A673 (cell line): ENCODE measurements at regions of chr12 and their contacts with region 1.

Region 1: DNA sequence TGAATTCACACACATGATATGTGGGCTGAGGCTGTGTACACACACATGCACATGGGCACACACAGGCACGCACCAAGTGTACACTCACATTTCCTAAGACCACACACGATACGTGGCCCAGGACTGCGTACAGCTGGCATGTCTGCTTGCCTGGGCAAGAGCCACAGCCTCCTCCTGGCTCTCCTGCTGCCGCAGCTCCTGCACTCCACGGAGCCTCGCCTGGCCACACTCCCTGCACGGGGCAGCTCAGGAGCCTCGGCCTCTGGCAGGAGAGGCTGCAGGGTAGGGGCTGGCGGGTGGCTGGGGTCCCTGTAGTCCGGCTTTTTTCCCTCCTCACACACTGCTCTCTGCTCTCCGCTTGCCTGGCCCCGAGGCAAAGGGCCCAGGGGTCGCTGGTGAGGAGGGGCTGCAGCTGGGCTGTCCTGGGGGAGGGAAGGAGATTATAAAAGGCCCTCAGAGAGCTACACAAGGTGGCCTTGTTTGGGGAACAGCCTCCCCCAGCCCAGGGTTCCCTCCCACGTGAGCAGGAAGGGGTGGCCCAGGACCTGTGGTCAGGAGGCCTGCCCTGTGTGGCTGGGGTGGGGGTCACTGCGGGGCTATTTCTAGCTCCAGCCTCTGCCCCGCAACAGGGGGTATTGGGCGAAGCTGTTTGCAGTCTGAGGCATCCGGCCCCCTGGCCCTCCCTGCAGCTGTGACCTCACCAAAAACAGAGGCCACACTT is 89.0 kb upstream of the SFSWAP start:
- DNase-seq: no peak
- H3K4me3 ChIP-seq: no peak overlapping the region
- H3K27ac ChIP-seq: no peak overlapping the region
- H3K4me1 ChIP-seq: peaks cover 15% of the 10 kb centered on the region
- H3K27me3 ChIP-seq: peaks cover 32% of the 10 kb centered on the region
- CTCF ChIP-seq: no peak

Region 2: GRCh38 chr12:130970165-130970907 is 651.5 kb before region 1 on chr12:
- CTCF ChIA-PET with region 1: no interaction called
- POLR2A ChIA-PET with region 1: no interaction called
- intact Hi-C with region 1: no loop called
- DNase-seq: no peak
- H3K4me3 ChIP-seq: no peak overlapping the region
- H3K27ac ChIP-seq: no peak overlapping the region
- H3K4me1 ChIP-seq: peaks cover 9% of the 10 kb centered on the region
- H3K27me3 ChIP-seq: no peaks in the 10 kb centered on the region
- CTCF ChIP-seq: no peak

Region 3: DNA sequence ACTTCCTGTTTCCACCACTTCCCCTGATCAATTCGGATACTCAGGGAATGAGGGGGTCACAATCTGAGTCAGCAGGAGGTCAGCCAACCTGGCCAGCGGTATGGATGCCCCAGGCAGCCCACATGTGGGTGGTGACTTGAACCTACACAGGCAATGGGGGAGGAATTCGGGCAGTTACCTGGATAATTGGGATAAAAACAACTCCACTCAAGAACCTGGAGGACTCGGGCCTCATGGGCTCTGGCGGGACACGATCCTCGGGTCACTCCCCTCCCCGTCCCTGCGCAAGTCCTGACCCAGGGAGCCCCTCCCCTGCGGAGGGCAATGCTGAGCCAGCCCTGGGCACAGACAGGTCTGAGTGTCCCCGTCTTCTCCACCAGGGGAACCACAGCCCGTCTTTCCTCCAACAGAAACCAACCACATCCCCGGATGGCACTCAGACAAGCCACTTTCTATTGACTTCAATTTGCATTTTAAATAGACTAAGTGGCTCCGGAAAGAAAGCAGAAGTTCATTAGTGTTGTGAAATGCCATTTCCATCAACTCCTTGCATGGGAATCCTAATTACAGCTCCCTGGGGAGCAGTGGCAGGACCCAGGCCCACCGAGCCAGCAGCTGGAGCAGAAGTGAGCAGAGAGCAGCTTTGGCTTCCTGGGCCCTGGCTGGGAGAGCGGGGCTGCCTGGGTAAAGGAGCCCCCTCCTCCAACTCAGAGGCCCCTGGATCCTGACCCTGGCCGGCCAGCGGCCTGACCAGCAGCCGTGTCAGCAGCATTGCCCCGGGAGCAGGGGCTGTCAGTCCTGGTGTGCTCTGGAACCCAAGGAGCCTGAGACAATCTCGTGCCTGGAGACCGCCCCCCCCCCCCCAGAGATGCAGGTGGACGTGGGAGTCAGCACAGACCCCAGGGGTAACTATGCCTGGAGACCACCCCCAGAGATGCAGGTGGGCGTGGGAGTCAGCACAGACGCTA is 294.1 kb before region 1 on chr12:
- CTCF ChIA-PET with region 1: no interaction called
- POLR2A ChIA-PET with region 1: no interaction called
- intact Hi-C with region 1: no loop called
- DNase-seq: peak; percentile 44
- H3K4me3 ChIP-seq: no peak overlapping the region
- H3K27ac ChIP-seq: no peak overlapping the region
- H3K4me1 ChIP-seq: no peaks in the 10 kb centered on the region
- H3K27me3 ChIP-seq: no peaks in the 10 kb centered on the region
- CTCF ChIP-seq: 0 out of 2 replicates have a peak, but pooled peaks have one; percentile 29

Region 4: DNA sequence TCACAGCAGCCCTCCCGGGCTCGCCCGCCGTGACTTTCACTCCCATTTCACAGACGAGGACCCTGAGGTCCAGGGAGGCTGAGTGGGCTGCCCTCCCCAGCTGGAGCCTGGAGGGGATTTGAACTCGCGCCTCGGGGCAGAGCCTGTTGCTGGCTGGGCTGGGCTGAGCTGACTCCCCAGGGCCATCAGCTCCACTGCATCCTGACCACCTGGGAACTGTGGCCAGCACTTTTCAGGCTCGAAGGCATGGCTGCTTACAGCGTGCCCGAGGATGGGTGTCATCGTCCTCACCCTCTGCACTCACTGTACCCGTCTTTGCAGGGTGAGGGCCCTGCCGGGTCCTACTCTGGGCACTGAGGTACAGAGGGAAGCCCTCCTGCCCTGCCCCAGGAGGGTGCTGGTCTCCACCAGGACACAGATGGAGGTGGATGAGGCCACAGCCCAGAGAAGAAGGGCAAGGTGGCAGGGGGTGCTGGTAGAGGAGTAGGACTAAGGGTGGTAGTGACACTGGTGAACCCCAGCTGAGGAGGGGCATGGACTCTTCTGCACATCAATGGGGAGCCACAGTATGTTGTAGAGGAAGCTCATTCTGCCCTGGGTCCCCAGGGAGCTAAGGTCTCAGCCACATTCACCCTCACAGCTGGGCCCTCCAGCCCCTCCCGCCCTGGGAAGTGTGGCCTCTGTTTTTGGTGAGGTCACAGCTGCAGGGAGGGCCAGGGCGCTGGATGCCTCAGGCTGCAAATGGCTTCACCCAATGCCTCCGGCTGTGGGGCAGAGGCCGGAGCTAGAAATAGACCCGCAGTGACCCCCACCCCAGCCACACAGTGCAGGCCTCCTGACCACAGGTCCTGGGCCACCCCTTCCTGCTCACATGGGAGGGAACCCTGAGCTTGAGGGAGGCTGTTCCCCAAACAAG is 276.1 kb before region 1 on chr12:
- CTCF ChIA-PET with region 1: no interaction called
- POLR2A ChIA-PET with region 1: no interaction called
- intact Hi-C with region 1: loop called (anchors 2 kb)
- DNase-seq: no peak
- H3K4me3 ChIP-seq: no peak overlapping the region
- H3K27ac ChIP-seq: no peak overlapping the region
- H3K4me1 ChIP-seq: no peaks in the 10 kb centered on the region
- H3K27me3 ChIP-seq: no peaks in the 10 kb centered on the region
- CTCF ChIP-seq: no peak